Heart right ventricle (tissue), 16 donors: ENCODE measurements at regions of chr5 and their contacts with region 1.

Region 1: GRCh38 chr5:6291961-6292360 is 86.4 kb downstream of the MED10 start:
- DNase-seq: no peak
- ATAC-seq: peak in 2 of 8 donors; percentile 29 to 67
- H3K4me3 ChIP-seq: no peak overlapping the region
- H3K27ac ChIP-seq: no peak overlapping the region
- H3K4me1 ChIP-seq: no peaks in the 10 kb centered on the region
- H3K27me3 ChIP-seq: no peaks in the 10 kb centered on the region
- CTCF ChIP-seq: peak in 7 of 9 donors; percentile 30 to 57 (median 44)

Region 2: GRCh38 chr5:6251565-6252102 is 40.3 kb before region 1 on chr5:
- intact Hi-C with region 1: no loop called
- DNase-seq: no peak
- ATAC-seq: no peak
- H3K4me3 ChIP-seq: no peak overlapping the region
- H3K27ac ChIP-seq: no peak overlapping the region
- H3K4me1 ChIP-seq: no peaks in the 10 kb centered on the region
- H3K27me3 ChIP-seq: peaks cover 0 to 6% (median 0%) of the 10 kb centered on the region in 7 donors
- CTCF ChIP-seq: no peak

Region 3: GRCh38 chr5:6435356-6435755 is 143.4 kb after region 1 on chr5:
- intact Hi-C with region 1: loop called in 1 of 10 experiments (anchors 10 kb)
- DNase-seq: no peak
- ATAC-seq: no peak
- H3K4me3 ChIP-seq: no peak overlapping the region
- H3K27ac ChIP-seq: no peak overlapping the region
- H3K4me1 ChIP-seq: peaks cover 0 to 21% (median 6%) of the 10 kb centered on the region in 9 donors
- H3K27me3 ChIP-seq: peaks cover 0 to 15% (median 0%) of the 10 kb centered on the region in 7 donors
- CTCF ChIP-seq: peak in 7 of 9 donors; percentile 20 to 46 (median 34)

Region 4: DNA sequence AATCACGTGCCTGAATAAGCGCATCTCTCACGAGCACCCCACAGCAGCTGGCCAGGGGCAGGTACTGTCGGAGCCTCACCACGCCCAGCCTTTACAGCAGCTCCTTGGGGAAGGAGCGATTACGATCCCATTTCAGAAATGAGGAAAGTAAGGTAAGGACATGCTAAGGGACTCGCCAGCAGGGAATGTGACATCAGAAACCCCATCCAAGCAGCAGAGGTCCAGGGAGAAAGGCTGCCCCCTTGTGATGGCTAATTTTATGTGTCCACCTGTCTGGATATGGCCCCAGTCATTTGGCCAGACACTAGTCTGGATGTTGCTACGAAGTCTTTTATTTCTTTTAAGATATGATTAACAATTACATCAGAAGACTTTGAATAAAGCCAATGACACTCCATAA is 233.9 kb after region 1 on chr5:
- intact Hi-C with region 1: loop called in 3 of 10 experiments (anchors 10 kb)
- DNase-seq: peak in 1 of 2 donors; percentile 46
- ATAC-seq: peak; percentile 46 to 89 (median 70)
- H3K4me3 ChIP-seq: no peak overlapping the region
- H3K27ac ChIP-seq: no peak overlapping the region
- H3K4me1 ChIP-seq: no peaks in the 10 kb centered on the region
- H3K27me3 ChIP-seq: peaks cover 0 to 11% (median 0%) of the 10 kb centered on the region in 7 donors
- CTCF ChIP-seq: peak; percentile 12 to 55 (median 39)

Region 5: GRCh38 chr5:6535594-6535993 is 243.6 kb after region 1 on chr5:
- intact Hi-C with region 1: loop called in 1 of 10 experiments (anchors 10 kb)
- DNase-seq: no peak
- ATAC-seq: no peak
- H3K4me3 ChIP-seq: no peak overlapping the region
- H3K27ac ChIP-seq: no peak overlapping the region
- H3K4me1 ChIP-seq: peaks cover 0 to 8% (median 0%) of the 10 kb centered on the region in 9 donors
- H3K27me3 ChIP-seq: no peaks in the 10 kb centered on the region
- CTCF ChIP-seq: no peak

Region 6: DNA sequence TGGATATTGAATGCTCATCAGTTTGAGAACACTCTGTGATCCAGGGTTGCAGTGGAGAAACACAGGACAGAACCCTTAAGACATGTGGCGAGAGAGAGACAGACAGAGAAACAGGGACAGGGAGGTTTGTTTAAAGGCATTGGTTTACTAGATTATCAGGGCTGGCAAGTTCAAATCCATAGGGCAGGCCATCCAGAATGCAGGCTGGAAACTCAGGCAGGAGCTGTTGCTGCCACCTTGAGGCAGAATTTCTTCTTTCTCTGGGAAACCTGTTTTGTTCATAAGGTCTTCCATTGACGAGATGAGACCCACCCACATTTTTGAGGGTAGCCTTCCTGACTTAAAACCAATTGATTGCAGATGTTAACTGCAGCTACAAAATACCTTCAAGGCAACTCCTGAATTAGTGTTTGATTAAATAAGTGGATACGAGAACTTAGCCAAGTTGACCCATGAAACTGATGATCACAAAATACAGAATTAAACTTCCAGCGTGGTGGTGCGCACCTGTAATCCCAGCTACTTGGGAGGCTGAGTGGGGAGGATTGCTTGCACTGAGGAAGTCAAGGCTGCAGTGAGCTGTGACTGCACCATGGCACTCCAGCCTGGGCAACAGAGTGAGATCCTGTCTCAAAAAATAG is 285.0 kb after region 1 on chr5:
- intact Hi-C with region 1: loop called in 4 of 10 experiments (anchors 2 to 5 kb)
- DNase-seq: no peak
- ATAC-seq: peak in 7 of 8 donors; percentile 28 to 46 (median 32)
- H3K4me3 ChIP-seq: no peak overlapping the region
- H3K27ac ChIP-seq: no peak overlapping the region
- H3K4me1 ChIP-seq: peaks cover 0 to 18% (median 4%) of the 10 kb centered on the region in 9 donors
- H3K27me3 ChIP-seq: peaks cover 0 to 16% (median 0%) of the 10 kb centered on the region in 7 donors
- CTCF ChIP-seq: peak in 8 of 9 donors; percentile 20 to 62 (median 57)

Region 7: DNA sequence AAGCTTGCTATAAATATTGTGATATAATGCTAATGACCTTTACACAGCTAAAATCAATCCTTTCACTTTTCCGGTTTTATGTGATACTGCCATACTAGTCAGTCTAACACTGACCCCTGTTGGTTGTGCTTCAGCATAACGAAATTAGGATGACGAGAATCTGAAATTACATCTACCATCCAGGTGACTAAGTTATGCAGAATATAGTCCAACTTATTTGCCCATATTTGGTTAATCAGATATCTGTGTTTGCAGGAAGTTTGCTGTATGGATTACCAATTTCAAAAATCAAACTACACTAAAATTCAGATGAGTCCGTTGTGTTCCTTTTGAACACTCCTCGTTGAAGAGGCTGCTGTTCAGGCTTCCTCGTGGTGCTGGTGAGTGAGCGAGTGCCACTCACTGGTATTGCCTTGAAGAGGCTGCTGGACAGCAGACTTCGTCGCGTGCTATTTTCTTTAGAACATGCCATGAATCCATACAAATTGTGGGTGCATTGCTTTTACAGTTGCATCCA is 453.8 kb after region 1 on chr5:
- intact Hi-C with region 1: loop called in 1 of 10 experiments (anchors 10 kb)
- DNase-seq: no peak
- ATAC-seq: peak; percentile 41 to 82 (median 64)
- H3K4me3 ChIP-seq: no peak overlapping the region
- H3K27ac ChIP-seq: peak overlapping the region in 3 of 10 donors; percentile 45 to 58 (median 49)
- H3K4me1 ChIP-seq: peaks cover 0 to 14% (median 8%) of the 10 kb centered on the region in 9 donors
- H3K27me3 ChIP-seq: no peaks in the 10 kb centered on the region
- CTCF ChIP-seq: peak; percentile 69 to 85 (median 81)